ENCODE measurements at regions of chr16 and their contacts with region 1.

Region 1: GRCh38 chr16:53130159-53131049 is 75.6 kb downstream of the CHD9 start:
- DNase-seq: peak; percentile 94 to 96 (median 95)
- H3K4me3 ChIP-seq: peak overlapping the region; percentile 81
- H3K27ac ChIP-seq: peak overlapping the region; percentile 56 to 91
- H3K4me1 ChIP-seq: no peaks in the 10 kb centered on the region
- H3K27me3 ChIP-seq: no peaks in the 10 kb centered on the region
- CTCF ChIP-seq: peak; percentile 51 to 90 (median 90)
- EP300 ChIP-seq: no peak
- POLR2A ChIP-seq: peak; percentile 22

Region 2: GRCh38 chr16:53071748-53072301 is 58.6 kb before region 1 on chr16:
- intact Hi-C with region 1: no loop called
- DNase-seq: peak; percentile 68 to 84 (median 83)
- H3K4me3 ChIP-seq: no peak overlapping the region
- H3K27ac ChIP-seq: peak overlapping the region in 1 of 2 donors; percentile 8
- H3K4me1 ChIP-seq: peaks cover 11% of the 10 kb centered on the region
- H3K27me3 ChIP-seq: no peaks in the 10 kb centered on the region
- CTCF ChIP-seq: no peak
- EP300 ChIP-seq: no peak
- POLR2A ChIP-seq: no peak

Region 3: GRCh38 chr16:53091466-53092211 is 38.8 kb before region 1 on chr16:
- intact Hi-C with region 1: loop called in 2 of 4 experiments (anchors 5 kb)
- DNase-seq: peak in 4 of 5 donors; percentile 43 to 54 (median 46)
- H3K4me3 ChIP-seq: no peak overlapping the region
- H3K27ac ChIP-seq: peak overlapping the region in 1 of 2 donors; percentile 69
- H3K4me1 ChIP-seq: peaks cover 15% of the 10 kb centered on the region
- H3K27me3 ChIP-seq: no peaks in the 10 kb centered on the region
- CTCF ChIP-seq: no peak
- EP300 ChIP-seq: no peak
- POLR2A ChIP-seq: no peak

Region 4: GRCh38 chr16:53099318-53100130 is 30.9 kb before region 1 on chr16:
- intact Hi-C with region 1: loop called in 2 of 4 experiments (anchors 5 kb)
- DNase-seq: peak; percentile 91 to 93 (median 91)
- H3K4me3 ChIP-seq: peak overlapping the region; percentile 42
- H3K27ac ChIP-seq: peak overlapping the region; percentile 58 to 92
- H3K4me1 ChIP-seq: peaks cover 14% of the 10 kb centered on the region
- H3K27me3 ChIP-seq: no peaks in the 10 kb centered on the region
- CTCF ChIP-seq: no peak
- EP300 ChIP-seq: peak; percentile 75
- POLR2A ChIP-seq: no peak

Region 5: GRCh38 chr16:53183442-53183841 is 53.0 kb after region 1 on chr16:
- intact Hi-C with region 1: no loop called
- DNase-seq: no peak
- H3K4me3 ChIP-seq: no peak overlapping the region
- H3K27ac ChIP-seq: no peak overlapping the region
- H3K4me1 ChIP-seq: peaks cover 2% of the 10 kb centered on the region
- H3K27me3 ChIP-seq: no peaks in the 10 kb centered on the region
- CTCF ChIP-seq: no peak
- EP300 ChIP-seq: no peak
- POLR2A ChIP-seq: no peak

Region 6: GRCh38 chr16:53207810-53208752 is 77.7 kb after region 1 on chr16:
- intact Hi-C with region 1: loop called in 1 of 4 experiments (anchors 2 kb)
- DNase-seq: peak in 4 of 5 donors; percentile 20 to 60 (median 32)
- H3K4me3 ChIP-seq: peak overlapping the region; percentile 29
- H3K27ac ChIP-seq: peak overlapping the region in 1 of 2 donors; percentile 81
- H3K4me1 ChIP-seq: no peaks in the 10 kb centered on the region
- H3K27me3 ChIP-seq: no peaks in the 10 kb centered on the region
- CTCF ChIP-seq: peak; percentile 44 to 73 (median 68)
- EP300 ChIP-seq: no peak
- POLR2A ChIP-seq: peak; percentile 14

Region 7: GRCh38 chr16:53341792-53342191 is 211.4 kb after region 1 on chr16:
- intact Hi-C with region 1: no loop called
- DNase-seq: no peak
- H3K4me3 ChIP-seq: no peak overlapping the region
- H3K27ac ChIP-seq: no peak overlapping the region
- H3K4me1 ChIP-seq: no peaks in the 10 kb centered on the region
- H3K27me3 ChIP-seq: no peaks in the 10 kb centered on the region
- CTCF ChIP-seq: no peak
- EP300 ChIP-seq: no peak
- POLR2A ChIP-seq: no peak